Upper lobe of right lung (tissue), 1 donor: ENCODE measurements at regions of chr2 and their contacts with region 1.

Region 1: DNA sequence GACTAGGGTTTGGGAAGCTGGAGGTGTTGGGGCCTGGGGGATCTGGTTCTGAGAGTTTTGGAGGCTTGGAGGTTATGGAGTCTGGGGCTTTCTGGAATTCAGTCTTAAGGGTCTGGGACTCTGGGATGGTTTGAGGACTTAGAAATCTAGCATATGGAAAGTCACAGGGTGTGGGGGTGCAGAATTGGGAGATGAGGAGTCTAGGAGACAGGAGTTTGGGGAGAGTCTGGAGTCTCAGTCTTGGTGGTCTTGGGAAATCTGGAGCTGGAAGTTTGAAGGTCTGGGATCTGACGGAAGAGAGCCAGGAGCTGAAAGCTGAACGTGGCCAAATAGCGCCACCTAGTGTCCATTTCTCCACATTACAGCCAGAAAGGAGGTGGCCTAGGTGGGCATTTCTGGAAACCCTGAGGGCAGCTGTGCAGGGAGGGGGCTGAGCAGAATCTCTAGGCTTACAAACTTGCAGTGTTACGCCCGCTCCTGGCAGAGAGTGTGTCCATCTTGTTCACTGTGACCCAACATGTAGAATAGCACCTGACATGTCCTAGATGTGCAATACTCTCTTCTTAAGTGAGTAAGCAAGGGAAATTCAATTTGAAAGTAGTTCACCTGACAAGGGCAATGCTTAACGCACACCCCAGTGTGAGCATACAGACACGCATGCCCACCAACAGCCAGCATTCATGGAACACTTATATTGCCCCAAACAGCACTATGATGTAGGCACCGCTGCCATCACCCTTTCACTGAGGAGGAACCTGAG is 204.8 kb downstream of the TFCP2L1 start:
- DNase-seq: no peak
- ATAC-seq: peak; percentile 59
- H3K4me3 ChIP-seq: no peak overlapping the region
- H3K27ac ChIP-seq: no peak overlapping the region
- H3K4me1 ChIP-seq: no peaks in the 10 kb centered on the region
- H3K27me3 ChIP-seq: peaks cover 22% of the 10 kb centered on the region
- CTCF ChIP-seq: peak; percentile 90

Region 2: GRCh38 chr2:120566331-120567035 is 513.7 kb before region 1 on chr2:
- intact Hi-C with region 1: no loop called
- DNase-seq: no peak
- ATAC-seq: no peak
- H3K4me3 ChIP-seq: no peak overlapping the region
- H3K27ac ChIP-seq: no peak overlapping the region
- H3K4me1 ChIP-seq: no peaks in the 10 kb centered on the region
- H3K27me3 ChIP-seq: no peaks in the 10 kb centered on the region
- CTCF ChIP-seq: no peak

Region 3: GRCh38 chr2:120697471-120697870 is 382.7 kb before region 1 on chr2:
- intact Hi-C with region 1: loop called (anchors 2 kb)
- DNase-seq: no peak
- ATAC-seq: no peak
- H3K4me3 ChIP-seq: no peak overlapping the region
- H3K27ac ChIP-seq: no peak overlapping the region
- H3K4me1 ChIP-seq: no peaks in the 10 kb centered on the region
- H3K27me3 ChIP-seq: peaks cover 44% of the 10 kb centered on the region
- CTCF ChIP-seq: no peak

Region 4: DNA sequence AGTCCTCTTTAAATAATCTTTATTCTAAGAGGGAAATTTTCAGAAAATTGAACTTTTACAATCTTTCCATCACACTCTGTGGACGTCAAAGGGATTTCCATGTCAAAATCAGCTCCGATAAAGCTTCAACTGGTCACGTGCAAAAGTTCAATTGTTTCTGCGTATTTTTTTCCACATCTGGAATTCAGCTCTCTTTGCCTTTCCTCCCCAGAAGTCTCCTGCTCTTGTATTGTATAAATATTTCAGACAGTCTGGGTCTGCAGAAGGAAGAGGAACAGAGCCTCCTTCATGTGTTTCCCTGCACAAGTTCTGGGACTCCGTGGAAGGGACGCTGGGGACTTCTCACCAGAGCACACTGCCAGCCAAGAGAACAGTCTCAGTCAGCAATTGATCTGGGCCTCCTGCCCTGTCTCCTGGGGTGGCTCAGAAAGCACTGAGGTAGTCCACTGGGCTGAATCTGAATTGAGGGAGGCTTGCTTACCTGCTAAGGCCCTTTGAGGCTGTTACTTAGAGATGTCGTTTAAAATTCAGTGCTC is 46.7 kb before region 1 on chr2:
- intact Hi-C with region 1: no loop called
- DNase-seq: no peak
- ATAC-seq: no peak
- H3K4me3 ChIP-seq: no peak overlapping the region
- H3K27ac ChIP-seq: no peak overlapping the region
- H3K4me1 ChIP-seq: no peaks in the 10 kb centered on the region
- H3K27me3 ChIP-seq: peaks cover 27% of the 10 kb centered on the region
- CTCF ChIP-seq: no peak

Region 5: DNA sequence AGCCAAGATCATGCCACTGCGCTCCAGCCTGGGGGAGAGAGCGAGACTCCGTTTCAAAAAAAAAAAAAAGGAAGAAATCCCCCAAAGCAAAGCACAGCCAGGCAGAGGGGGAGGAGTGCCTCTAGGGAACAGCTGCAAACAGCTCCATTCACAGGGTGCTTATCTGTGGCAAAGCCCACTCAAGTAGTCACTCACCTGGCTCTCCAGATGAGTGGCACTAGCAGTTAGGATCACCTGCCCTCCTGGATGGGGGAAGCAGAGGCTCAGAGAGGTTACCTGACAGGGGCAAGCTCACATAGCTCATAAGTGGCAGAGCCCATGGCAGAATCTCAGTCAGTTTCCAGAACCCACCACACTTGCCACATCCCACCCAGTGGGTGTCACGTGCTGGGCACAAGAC is 174.6 kb after region 1 on chr2:
- intact Hi-C with region 1: no loop called
- DNase-seq: peak; percentile 78
- ATAC-seq: peak; percentile 89
- H3K4me3 ChIP-seq: no peak overlapping the region
- H3K27ac ChIP-seq: peak overlapping the region; percentile 47
- H3K4me1 ChIP-seq: no peaks in the 10 kb centered on the region
- H3K27me3 ChIP-seq: peaks cover 6% of the 10 kb centered on the region
- CTCF ChIP-seq: no peak

Region 6: GRCh38 chr2:121356058-121356640 is 276.0 kb after region 1 on chr2:
- intact Hi-C with region 1: loop called (anchors 10 kb)
- DNase-seq: no peak
- ATAC-seq: peak; percentile 83
- H3K4me3 ChIP-seq: no peak overlapping the region
- H3K27ac ChIP-seq: no peak overlapping the region
- H3K4me1 ChIP-seq: no peaks in the 10 kb centered on the region
- H3K27me3 ChIP-seq: no peaks in the 10 kb centered on the region
- CTCF ChIP-seq: peak; percentile 66